A549 (cell line): ENCODE measurements at regions of chr17 and their contacts with region 1.

Region 1: GRCh38 chr17:58200017-58200633 is 7.6 kb downstream of the EPX start:
- DNase-seq: peak; percentile 80 to 89
- ATAC-seq: peak; percentile 86 to 98
- H3K4me3 ChIP-seq: no peak overlapping the region
- H3K27ac ChIP-seq: 0 out of 6 replicates have a peak overlapping the region, but pooled peaks of 1 of the 2 experiments have one; percentile 23
- H3K4me1 ChIP-seq: no peaks in the 10 kb centered on the region
- CTCF ChIP-seq: peak; percentile 64
- EP300 ChIP-seq: no peak
- POLR2A ChIP-seq: no peak
- RAD21 ChIP-seq: peak in 1 of 2 experiments; percentile 57; a peak in 3 of 5 replicates

Region 2: DNA sequence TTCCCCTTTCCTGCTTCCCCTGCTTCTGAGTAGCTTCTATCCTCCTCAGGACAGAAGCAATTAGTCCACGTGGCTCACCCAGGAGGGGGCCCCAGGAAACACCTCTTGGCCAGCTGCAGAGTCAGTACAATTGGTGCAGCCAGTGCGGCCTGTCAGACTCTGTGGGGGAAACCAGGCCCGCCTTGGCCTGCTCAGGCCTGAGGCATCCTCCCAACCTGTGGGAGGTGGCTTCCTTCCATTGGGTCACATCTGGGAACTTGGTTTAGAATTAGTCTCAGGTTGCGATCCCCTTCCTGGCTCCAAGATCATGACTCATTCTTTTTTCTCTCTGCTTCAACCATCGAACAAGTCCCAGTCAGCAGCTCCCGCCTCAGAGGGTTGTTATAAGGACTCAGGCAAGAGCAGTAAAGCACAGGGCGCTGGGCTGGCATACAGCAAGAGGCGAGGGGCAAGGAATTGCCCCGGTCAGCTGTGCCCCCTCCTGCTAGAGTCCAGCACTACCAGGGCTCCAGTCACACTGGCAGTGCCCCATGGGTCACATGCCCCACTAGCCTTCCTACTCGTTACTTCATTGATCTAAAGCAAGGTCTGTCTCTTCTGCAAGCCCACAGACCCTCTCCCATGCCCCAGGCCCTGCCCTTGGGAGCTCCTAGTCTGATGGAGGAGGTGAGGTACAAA is 15.7 kb before region 1 on chr17:
- CTCF ChIA-PET with region 1: interaction called, 55 read pairs
- POLR2A ChIA-PET with region 1: no interaction called
- DNase-seq: no peak
- ATAC-seq: peak; percentile 8 to 39; a peak in 3 of 6 replicates
- H3K4me3 ChIP-seq: no peak overlapping the region
- H3K27ac ChIP-seq: no peak overlapping the region
- H3K4me1 ChIP-seq: peaks cover 1% of the 10 kb centered on the region; the same call in 2 of the 3 replicates
- CTCF ChIP-seq: no peak
- EP300 ChIP-seq: no peak
- POLR2A ChIP-seq: no peak
- RAD21 ChIP-seq: no peak

Region 3: GRCh38 chr17:58189436-58190146 is 10.5 kb before region 1 on chr17:
- CTCF ChIA-PET with region 1: interaction called, 55 read pairs
- POLR2A ChIA-PET with region 1: no interaction called
- DNase-seq: peak; percentile 54 to 71
- ATAC-seq: peak; percentile 62 to 71
- H3K4me3 ChIP-seq: no peak overlapping the region
- H3K27ac ChIP-seq: no peak overlapping the region
- H3K4me1 ChIP-seq: peaks cover 12% of the 10 kb centered on the region; the same call in 2 of the 3 replicates
- CTCF ChIP-seq: no peak
- EP300 ChIP-seq: no peak
- POLR2A ChIP-seq: no peak
- RAD21 ChIP-seq: no peak

Region 4: GRCh38 chr17:58210922-58211321 is 10.8 kb after region 1 on chr17:
- CTCF ChIA-PET with region 1: interaction called, 39 read pairs
- POLR2A ChIA-PET with region 1: no interaction called
- DNase-seq: no peak
- ATAC-seq: peak in 1 of 2 experiments; percentile 63; a peak in 3 of 6 replicates
- H3K4me3 ChIP-seq: no peak overlapping the region
- H3K27ac ChIP-seq: no peak overlapping the region
- H3K4me1 ChIP-seq: no peaks in the 10 kb centered on the region
- CTCF ChIP-seq: peak; percentile 26; the same call in 1 of the 3 replicates
- EP300 ChIP-seq: no peak
- POLR2A ChIP-seq: no peak
- RAD21 ChIP-seq: no peak

Region 5: GRCh38 chr17:58219001-58219788 is 19.1 kb after region 1 on chr17 and contains the start of gene MKS1:
- CTCF ChIA-PET with region 1: interaction called, 39 read pairs
- POLR2A ChIA-PET with region 1: interaction called, 6 read pairs
- DNase-seq: peak; percentile 95 to 100
- ATAC-seq: peak; percentile 98 to 100
- H3K4me3 ChIP-seq: peak within 1 kb of the TSS; percentile 77
- H3K27ac ChIP-seq: peak within 1 kb of the TSS; percentile 85 to 89
- H3K4me1 ChIP-seq: peaks cover 9% of the 10 kb centered on the region; the same call in 2 of the 3 replicates
- CTCF ChIP-seq: peak; percentile 34; the same call in 2 of the 3 replicates
- EP300 ChIP-seq: no peak
- POLR2A ChIP-seq: peak; percentile 93
- RAD21 ChIP-seq: no peak
- polyA plus RNA-seq, gene MKS1: 18.6 and 19.0 TPM in 2 replicates